Activated T-helper 1 cell treated with anti-CD3 and anti-CD28 coated beads, Interleukin-12 subunit alpha, Interleukin-12 subunit beta, Interleukin-2, Interleukin-4 antibody, amounts not matched to agents 30 ng/mL and 10 ng/mL and 1 ng/mL, durations not matched to agents 14 hours and 24 hours and 36 hours (primary cell): ENCODE measurements at regions of chr11 and their contacts with region 1.

Region 1: DNA sequence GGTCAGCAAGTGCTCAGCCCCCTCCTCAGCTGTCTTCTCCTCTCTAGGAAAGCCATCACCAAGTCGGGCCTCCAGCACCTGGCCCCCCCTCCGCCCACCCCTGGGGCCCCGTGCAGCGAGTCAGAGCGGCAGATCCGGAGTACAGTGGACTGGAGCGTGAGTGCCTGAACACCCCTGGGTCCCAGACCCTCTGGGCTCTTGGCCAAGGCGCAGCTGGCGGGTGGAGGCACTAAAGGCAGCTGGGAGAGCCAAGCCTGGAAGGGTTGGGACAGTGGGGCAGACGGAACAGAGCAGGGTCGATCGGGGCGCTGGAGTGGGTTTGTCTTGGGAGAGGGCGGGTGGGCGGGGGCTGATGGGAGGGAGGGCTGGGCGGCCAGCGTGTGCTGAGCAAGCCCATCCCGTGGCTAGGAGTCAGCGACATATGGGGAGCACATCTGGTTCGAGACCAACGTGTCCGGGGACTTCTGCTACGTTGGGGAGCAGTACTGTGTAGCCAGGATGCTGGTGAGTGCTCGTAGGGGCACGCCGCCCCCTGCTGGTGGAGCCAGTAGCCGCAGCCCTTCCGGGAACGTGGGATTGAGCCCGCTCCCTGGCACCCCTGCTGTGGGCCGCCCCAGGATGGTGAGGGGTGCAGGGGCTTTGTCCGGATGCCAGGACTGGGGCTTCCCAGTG is 14.1 kb upstream of the MDK start:
- DNase-seq: peak; percentile 61
- H3K4me3 Mint-ChIP-seq: no peak overlapping the region
- H3K27ac Mint-ChIP-seq: peak overlapping the region; percentile 34
- H3K4me1 Mint-ChIP-seq: peaks cover 18% of the 10 kb centered on the region
- H3K27me3 Mint-ChIP-seq: no peaks in the 10 kb centered on the region

Region 2: DNA sequence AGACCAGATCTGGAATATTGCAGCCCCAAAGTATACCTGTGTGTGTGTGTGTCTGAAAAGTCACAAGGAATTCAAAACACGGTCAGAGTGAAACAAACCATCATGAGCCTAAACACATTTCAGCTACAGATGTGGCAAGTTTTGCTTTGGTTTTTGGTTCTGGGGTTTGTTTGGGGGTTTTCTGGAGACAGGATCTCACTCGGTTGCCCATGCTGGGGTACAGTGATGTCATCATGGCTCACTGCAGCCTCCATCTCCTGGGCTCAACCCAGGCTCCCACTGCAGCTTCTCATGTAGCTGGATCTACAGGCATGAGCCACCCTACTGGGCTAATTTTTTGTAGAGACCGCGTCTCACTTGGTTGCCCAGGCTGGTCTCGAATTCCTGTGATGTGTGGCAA is 204.7 kb before region 1 on chr11:
- intact Hi-C with region 1: no loop called
- DNase-seq: no peak
- H3K4me3 Mint-ChIP-seq: no peak overlapping the region
- H3K27ac Mint-ChIP-seq: no peak overlapping the region
- H3K4me1 Mint-ChIP-seq: peaks cover 9% of the 10 kb centered on the region
- H3K27me3 Mint-ChIP-seq: peaks cover 29% of the 10 kb centered on the region

Region 3: GRCh38 chr11:46352063-46352841 is 15.1 kb before region 1 on chr11:
- intact Hi-C with region 1: loop called (anchors 1 kb)
- DNase-seq: peak; percentile 66
- H3K4me3 Mint-ChIP-seq: peak overlapping the region; percentile 77
- H3K27ac Mint-ChIP-seq: peak overlapping the region; percentile 58
- H3K4me1 Mint-ChIP-seq: peaks cover 64% of the 10 kb centered on the region
- H3K27me3 Mint-ChIP-seq: no peaks in the 10 kb centered on the region

Region 4: GRCh38 chr11:46380340-46381047 is 13.1 kb after region 1 on chr11:
- intact Hi-C with region 1: loop called (anchors 2 kb)
- DNase-seq: peak; percentile 54
- H3K4me3 Mint-ChIP-seq: peak overlapping the region; percentile 78
- H3K27ac Mint-ChIP-seq: peak overlapping the region; percentile 75
- H3K4me1 Mint-ChIP-seq: no peaks in the 10 kb centered on the region
- H3K27me3 Mint-ChIP-seq: peaks cover 2% of the 10 kb centered on the region

Region 5: GRCh38 chr11:46537537-46538295 is 170.3 kb after region 1 on chr11:
- intact Hi-C with region 1: loop called (anchors 1 kb)
- DNase-seq: peak; percentile 47
- H3K4me3 Mint-ChIP-seq: no peak overlapping the region
- H3K27ac Mint-ChIP-seq: no peak overlapping the region
- H3K4me1 Mint-ChIP-seq: peaks cover 15% of the 10 kb centered on the region
- H3K27me3 Mint-ChIP-seq: no peaks in the 10 kb centered on the region